Caco-2 (cell line): ENCODE measurements at regions of chr10 and their contacts with region 1.

Region 1: DNA sequence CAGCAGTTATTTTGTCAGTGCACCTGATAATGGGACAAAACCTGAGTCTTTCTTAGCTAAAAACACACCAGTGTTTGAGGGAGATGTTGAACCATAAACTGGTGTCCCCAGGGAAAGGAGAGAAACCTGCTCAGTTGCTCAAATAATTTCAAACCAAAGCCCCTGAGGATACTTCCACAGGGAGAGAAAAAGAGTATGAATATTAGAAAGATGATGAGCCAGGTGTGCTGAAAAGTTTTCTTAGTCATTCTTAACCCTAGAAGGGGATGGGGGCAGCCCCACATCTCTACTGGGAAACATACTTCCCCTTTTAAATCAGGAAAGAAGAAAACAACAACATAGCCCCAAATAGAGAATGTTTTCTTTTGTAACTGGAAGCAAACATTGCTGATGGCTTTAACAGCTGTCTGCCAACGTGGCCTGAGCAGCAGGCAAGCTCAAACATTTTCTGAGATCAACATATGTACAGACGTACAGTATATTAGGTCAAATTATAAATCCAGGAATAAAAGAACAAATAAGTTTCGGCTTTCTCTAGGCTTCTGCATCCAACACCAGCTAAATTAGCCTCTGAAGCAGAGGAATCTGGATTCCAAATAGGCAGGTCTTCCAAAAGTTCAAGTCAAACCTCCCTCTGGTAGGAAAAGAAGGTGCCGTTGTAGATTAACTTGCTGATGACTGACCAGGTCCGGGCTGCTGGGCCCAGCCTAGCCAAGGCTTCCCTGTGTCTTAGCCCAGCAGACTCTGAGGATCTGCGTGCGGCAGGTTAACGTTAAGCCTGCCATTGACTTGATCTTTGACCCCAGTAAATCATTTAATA is 30.5 kb upstream of the FBXW4 start:
- DNase-seq: peak; percentile 36 to 59
- H3K4me3 ChIP-seq: no peak overlapping the region
- H3K4me3 Mint-ChIP-seq: no peak overlapping the region
- H3K27ac Mint-ChIP-seq: peak overlapping the region; percentile 43
- H3K4me1 ChIP-seq: peaks cover 20% of the 10 kb centered on the region
- H3K4me1 Mint-ChIP-seq: peaks cover 20% of the 10 kb centered on the region
- H3K27me3 ChIP-seq: no peaks in the 10 kb centered on the region
- H3K27me3 Mint-ChIP-seq: no peaks in the 10 kb centered on the region
- CTCF ChIP-seq: no peak

Region 2: DNA sequence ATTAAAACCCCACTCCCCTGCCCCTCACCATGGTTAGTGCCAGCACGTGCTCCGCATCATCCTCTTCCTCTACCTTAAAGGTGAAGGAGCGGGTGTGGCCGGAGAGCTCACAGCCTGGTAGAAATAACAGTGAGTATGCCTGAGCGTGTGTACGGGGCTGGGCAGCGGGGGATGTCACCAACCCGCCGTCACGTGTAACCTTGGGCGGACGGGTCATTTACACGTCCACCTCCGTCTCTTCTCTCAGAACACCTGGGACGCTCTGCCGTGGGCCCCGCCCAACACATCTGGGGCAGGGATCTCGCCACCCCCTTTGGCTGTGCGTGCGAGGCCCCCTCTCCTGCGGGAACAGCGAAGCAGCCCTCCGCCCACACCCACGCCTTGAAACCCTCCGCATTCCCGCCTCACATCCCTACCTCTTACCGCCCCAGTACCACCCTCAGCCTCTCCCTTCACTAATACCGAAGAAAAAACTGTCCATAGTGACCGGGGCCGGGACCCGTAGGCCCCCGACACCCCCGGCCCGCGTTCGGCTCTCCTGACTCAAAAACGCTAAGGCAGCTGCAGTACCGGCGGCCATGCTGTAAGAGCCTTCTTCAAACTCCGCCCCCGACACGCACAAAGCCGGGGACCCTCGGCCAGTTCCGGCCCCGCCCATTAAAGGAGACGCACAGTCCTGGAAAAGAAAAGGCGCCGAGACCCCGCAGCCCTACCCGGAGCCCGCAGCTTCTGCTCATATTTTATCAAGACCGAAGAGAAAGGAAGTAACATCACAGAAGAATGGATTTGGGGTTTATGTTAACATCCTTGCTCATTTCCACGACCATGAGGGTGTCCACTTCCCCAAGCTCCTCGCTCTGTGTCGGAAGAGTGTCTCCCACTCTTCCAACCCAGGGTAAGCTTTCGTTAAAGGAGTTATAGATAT is 57.6 kb after region 1 on chr10 and contains the start of gene NPM3:
- CTCF ChIA-PET with region 1: no interaction called
- POLR2A ChIA-PET with region 1: no interaction called
- intact Hi-C with region 1: loop called (anchors 5 kb)
- DNase-seq: peak; percentile 87 to 89
- H3K4me3 ChIP-seq: peak within 1 kb of the TSS; percentile 96
- H3K4me3 Mint-ChIP-seq: peak within 1 kb of the TSS; percentile 93
- H3K27ac Mint-ChIP-seq: peak within 1 kb of the TSS; percentile 97
- H3K4me1 ChIP-seq: peaks cover 10% of the 10 kb centered on the region
- H3K4me1 Mint-ChIP-seq: peaks cover 8% of the 10 kb centered on the region
- H3K27me3 ChIP-seq: no peaks in the 10 kb centered on the region
- H3K27me3 Mint-ChIP-seq: no peaks in the 10 kb centered on the region
- CTCF ChIP-seq: no peak
- total RNA-seq, gene NPM3: 92.6 and 103 TPM in 2 replicates

Region 3: GRCh38 chr10:102300278-102300843 is 574.9 kb after region 1 on chr10:
- CTCF ChIA-PET with region 1: no interaction called
- POLR2A ChIA-PET with region 1: no interaction called
- intact Hi-C with region 1: no loop called
- DNase-seq: no peak
- H3K4me3 ChIP-seq: no peak overlapping the region
- H3K4me3 Mint-ChIP-seq: no peak overlapping the region
- H3K27ac Mint-ChIP-seq: no peak overlapping the region
- H3K4me1 ChIP-seq: no peaks in the 10 kb centered on the region
- H3K4me1 Mint-ChIP-seq: peaks cover 7% of the 10 kb centered on the region
- H3K27me3 ChIP-seq: no peaks in the 10 kb centered on the region
- H3K27me3 Mint-ChIP-seq: no peaks in the 10 kb centered on the region
- CTCF ChIP-seq: no peak